Astrocyte of the cerebellum (primary cell): ENCODE measurements at regions of chr9 and their contacts with region 1.

Region 1: GRCh38 chr9:89941875-89942274 is 337.1 kb downstream of the GADD45G start:
- DNase-seq: peak; percentile 66
- H3K4me3 ChIP-seq: no peak overlapping the region
- CTCF ChIP-seq: no peak

Region 2: DNA sequence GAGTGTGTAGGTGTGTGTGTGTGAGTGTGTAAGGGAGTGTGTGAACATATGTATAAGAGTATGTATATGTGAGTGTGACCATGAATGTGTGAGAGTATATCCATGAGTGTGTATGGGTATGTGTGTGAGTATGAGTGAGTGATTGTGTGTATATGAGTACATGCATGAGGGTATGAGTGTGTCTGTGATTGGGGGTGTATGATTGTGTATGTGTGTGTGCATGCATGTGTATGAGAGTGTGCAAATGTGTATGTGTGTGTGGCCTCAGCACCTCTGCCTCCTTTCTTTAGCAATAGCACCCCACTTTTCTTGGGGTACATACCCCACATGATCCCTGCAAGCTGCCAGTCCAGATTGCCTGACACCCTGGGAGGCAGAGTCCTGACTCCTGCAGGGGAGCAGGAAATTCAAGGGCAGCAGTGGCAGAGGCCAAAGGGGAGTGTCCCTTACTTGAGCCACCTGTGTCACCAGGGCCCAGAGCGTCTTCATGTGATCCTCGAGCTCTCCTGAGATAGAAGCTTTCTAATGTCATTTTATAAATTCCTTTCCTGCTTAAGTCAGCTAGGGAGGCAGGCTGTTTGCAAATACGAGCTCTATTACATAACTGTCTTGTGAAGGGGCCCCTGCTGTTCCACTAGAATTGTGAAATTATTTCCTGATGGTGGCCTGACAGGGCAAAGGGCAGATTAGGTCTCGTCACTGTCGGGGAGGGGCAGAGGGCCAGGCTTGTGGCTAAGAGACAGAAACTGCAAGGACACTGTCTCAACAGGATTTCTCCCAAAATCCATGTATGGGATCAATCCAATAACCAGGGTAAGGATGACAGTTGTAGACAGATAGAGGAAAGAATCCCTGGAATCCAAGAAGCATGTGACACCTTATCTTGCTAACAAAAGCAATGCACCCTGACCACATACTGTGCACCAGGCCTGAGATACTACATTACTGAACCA is 52.1 kb after region 1 on chr9:
- in situ Hi-C with region 1: no loop called
- DNase-seq: no peak
- H3K4me3 ChIP-seq: no peak overlapping the region
- CTCF ChIP-seq: no peak

Region 3: GRCh38 chr9:90020276-90020871 is 78.5 kb after region 1 on chr9:
- in situ Hi-C with region 1: loop called (anchors 5 kb)
- DNase-seq: no peak
- H3K4me3 ChIP-seq: no peak overlapping the region
- CTCF ChIP-seq: no peak

Region 4: DNA sequence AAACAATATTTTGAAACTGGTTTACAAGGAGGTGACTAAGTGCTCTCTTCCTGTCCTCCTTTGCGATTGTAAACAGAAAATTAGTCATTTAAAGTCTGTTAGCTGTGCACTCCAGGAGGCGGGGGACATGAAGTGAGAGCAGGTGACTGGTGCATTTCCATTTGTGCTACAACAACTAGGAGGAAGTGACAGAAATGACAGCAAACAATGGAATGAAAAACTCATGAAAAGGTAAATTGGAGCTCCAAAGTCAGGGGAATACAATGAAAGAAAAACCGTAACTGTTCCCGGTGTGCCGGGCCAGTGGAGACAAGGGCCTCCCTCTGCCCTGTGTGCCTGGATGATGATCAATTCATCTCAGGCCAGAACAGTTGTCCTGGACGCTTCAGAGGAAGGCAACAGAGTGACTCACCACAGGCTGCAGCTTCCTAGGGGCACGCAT is 102.9 kb after region 1 on chr9:
- in situ Hi-C with region 1: no loop called
- DNase-seq: no peak
- H3K4me3 ChIP-seq: no peak overlapping the region
- CTCF ChIP-seq: no peak